IMR-90 (cell line): ENCODE measurements at regions of chr5 and their contacts with region 1.

Region 1: DNA sequence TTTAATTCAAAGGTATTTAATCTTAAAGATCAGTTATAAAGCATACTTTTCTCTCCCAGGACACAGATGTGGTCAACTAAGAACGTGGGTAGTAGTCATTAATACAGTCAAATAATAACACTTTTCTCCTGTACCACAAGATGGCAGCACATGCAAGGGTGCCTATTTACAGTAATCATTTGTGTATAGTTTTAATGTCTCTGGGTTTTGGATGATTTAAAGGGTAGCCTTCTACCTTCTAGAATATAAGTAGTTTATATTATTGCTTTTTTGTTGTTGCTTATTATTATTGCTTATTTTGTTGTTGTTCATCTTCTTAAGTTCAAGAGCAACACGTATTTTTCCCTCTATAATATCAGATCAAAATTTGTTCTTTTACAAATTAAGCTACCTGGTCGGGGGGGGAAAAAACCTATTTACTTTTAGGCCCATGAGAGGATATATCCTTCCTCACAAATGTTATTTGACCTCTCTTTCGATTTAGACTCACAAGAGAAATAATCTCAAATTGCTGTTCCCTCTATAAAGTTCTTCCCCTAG is 59.6 kb upstream of the SLC27A6 start:
- DNase-seq: peak; percentile 58
- ATAC-seq: peak; percentile 89
- H3K4me3 ChIP-seq: no peak overlapping the region
- H3K27ac ChIP-seq: no peak overlapping the region
- H3K4me1 ChIP-seq: no peaks in the 10 kb centered on the region
- H3K27me3 ChIP-seq: no peaks in the 10 kb centered on the region
- CTCF ChIP-seq: peak; percentile 84
- POLR2A ChIP-seq: no peak
- RAD21 ChIP-seq: peak; percentile 78

Region 2: DNA sequence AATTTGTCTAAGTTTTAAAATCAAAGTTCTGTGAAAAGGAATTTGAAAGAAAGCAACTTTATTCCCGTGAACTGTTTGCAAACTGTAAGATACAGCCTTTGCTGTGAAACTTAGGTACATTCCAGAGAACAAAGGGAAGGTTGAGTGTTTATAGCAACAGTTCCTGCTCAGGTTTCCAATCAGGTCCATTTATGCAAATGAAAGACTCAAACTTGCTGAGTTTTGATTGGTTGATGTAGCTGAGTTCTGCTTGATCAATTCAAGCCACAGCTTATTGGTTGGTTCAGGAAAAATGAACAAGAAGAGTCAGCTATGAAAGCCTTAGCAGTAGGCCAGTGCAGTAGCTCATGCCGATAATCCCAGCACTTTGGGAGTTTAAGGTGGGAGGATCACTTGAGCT is 97.6 kb after region 1 on chr5:
- CTCF ChIA-PET with region 1: no interaction called
- POLR2A ChIA-PET with region 1: no interaction called
- dilution Hi-C with region 1: no loop called
- in situ Hi-C with region 1: loop called (anchors 25 kb)
- intact Hi-C with region 1: no loop called
- DNase-seq: no peak
- ATAC-seq: no peak
- H3K4me3 ChIP-seq: no peak overlapping the region
- H3K27ac ChIP-seq: no peak overlapping the region
- H3K4me1 ChIP-seq: no peaks in the 10 kb centered on the region
- H3K27me3 ChIP-seq: no peaks in the 10 kb centered on the region
- CTCF ChIP-seq: no peak
- POLR2A ChIP-seq: no peak
- RAD21 ChIP-seq: no peak

Region 3: DNA sequence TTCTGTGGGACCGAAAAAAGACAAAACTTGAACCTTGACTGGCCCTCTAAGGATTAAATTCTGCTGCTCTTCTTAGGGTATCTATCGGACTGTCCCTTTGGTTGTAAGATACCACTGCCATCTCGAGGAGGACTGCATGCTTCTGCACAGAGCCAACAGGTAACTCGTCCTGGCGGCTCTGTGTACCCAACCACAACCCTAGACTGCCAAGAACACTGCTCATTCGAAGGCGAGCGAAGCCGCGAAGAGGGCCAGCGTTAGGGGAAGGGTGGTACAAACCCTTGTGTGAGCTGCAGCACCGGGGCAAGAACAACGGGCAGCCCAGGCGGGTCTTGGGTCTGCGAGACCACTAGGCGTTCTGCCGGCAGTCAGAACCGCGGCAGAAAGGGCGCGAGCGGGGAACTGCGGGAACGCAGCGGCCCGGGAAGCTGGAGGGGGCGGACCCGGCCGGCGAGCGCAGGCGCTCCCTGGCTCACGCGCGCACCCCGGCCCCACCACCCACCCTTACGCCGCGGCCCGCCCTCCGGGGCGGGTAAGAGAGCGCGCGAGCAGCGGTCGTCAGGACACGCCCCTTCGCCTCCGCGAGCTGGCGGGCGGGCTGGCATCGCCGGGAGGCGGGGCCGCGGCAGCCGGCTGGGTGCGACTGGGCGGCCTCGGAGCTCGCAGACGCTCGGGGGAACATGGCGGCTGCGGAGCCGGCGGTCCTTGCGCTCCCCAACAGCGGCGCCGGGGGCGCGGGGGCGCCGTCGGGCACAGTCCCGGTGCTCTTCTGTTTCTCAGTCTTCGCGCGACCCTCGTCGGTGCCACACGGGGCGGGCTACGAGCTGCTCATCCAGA is 188.7 kb after region 1 on chr5 and contains the start of gene ISOC1:
- CTCF ChIA-PET with region 1: interaction called, 3 read pairs
- POLR2A ChIA-PET with region 1: no interaction called
- dilution Hi-C with region 1: no loop called
- in situ Hi-C with region 1: no loop called
- intact Hi-C with region 1: loop called (anchors 1 kb)
- DNase-seq: peak; percentile 86
- ATAC-seq: peak; percentile 97
- H3K4me3 ChIP-seq: peak within 1 kb of the TSS; percentile 89
- H3K27ac ChIP-seq: peak within 1 kb of the TSS; percentile 68
- H3K4me1 ChIP-seq: peaks cover 4% of the 10 kb centered on the region; the same call in 1 of the 2 replicates
- H3K27me3 ChIP-seq: no peaks in the 10 kb centered on the region; the same call in 1 of the 2 replicates
- CTCF ChIP-seq: peak; percentile 6; the same call in 1 of the 2 replicates
- POLR2A ChIP-seq: peak; percentile 69
- RAD21 ChIP-seq: no peak
- total RNA-seq, gene ISOC1: 10.8 and 18.9 TPM in 2 replicates

Region 4: DNA sequence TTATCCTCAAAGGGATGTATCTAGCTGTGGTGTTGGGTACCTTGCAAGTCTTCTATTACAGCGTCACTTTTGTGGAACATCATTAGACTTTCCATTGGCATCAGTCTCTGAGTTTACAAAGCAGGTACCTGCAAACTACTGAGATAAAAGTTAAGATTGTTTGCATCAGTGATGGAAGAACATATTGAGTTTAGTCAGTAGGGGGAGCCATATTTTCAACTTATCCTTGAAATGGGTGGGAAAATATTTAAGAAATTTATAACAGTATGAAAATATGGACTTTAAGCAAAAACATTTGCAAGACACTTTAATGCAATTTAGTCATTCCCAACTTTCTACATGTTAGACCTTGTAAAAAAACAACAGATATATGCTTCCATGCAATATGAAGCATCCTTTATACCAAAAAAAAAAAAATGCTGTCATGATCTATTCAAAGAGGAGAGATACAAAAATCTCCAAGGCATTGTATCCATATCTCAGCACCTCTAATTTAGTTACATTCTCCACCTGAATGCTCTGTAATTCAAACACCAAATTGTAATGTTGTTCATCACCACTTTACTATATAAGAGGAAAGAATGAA is 455.9 kb after region 1 on chr5:
- CTCF ChIA-PET with region 1: no interaction called
- POLR2A ChIA-PET with region 1: no interaction called
- dilution Hi-C with region 1: no loop called
- in situ Hi-C with region 1: no loop called
- intact Hi-C with region 1: loop called (anchors 10 kb)
- DNase-seq: peak; percentile 3
- ATAC-seq: no peak; the same call in 1 of the 2 replicates
- H3K4me3 ChIP-seq: no peak overlapping the region
- H3K27ac ChIP-seq: no peak overlapping the region
- H3K4me1 ChIP-seq: no peaks in the 10 kb centered on the region
- H3K27me3 ChIP-seq: no peaks in the 10 kb centered on the region
- CTCF ChIP-seq: peak; percentile 47
- POLR2A ChIP-seq: no peak
- RAD21 ChIP-seq: 0 out of 2 replicates have a peak, but pooled peaks have one; percentile 28

Region 5: DNA sequence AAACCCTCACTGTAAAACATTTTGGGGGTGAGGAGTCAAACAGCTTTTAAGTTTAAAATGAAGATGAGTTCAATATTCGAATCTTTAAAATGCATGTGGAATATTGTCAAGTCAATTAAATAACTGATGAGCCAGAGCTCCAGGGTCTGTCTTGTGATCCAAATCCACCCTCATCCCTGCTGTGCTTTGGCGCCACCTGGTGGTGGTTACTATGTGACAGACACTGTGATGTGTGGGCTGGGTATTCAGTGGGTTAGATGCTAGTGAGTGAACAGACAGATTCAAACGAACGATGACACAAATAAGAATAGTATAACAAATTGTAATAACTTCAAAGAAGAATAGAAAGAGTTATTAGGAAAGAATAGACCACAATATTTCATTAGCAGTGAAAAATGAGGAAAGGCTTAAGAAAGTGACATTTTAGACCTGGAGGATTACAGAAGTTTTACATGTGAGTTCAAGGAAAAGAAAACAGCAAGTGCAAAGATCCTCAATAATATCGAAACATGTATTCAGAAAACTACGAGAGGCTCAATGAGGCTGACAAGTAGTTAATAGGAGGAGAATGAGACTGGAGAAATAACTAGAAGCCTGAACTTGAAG is 947.2 kb after region 1 on chr5:
- CTCF ChIA-PET with region 1: no interaction called
- POLR2A ChIA-PET with region 1: no interaction called
- dilution Hi-C with region 1: no loop called
- in situ Hi-C with region 1: no loop called
- intact Hi-C with region 1: loop called (anchors 2 kb)
- DNase-seq: peak; percentile 55
- ATAC-seq: peak; percentile 91
- H3K4me3 ChIP-seq: no peak overlapping the region
- H3K27ac ChIP-seq: no peak overlapping the region
- H3K4me1 ChIP-seq: no peaks in the 10 kb centered on the region
- H3K27me3 ChIP-seq: no peaks in the 10 kb centered on the region
- CTCF ChIP-seq: peak; percentile 78
- POLR2A ChIP-seq: no peak
- RAD21 ChIP-seq: peak; percentile 58